Posterior vena cava (tissue), 2 donors: ENCODE measurements at regions of chr15 and their contacts with region 1.

Region 1: GRCh38 chr15:93823971-93824913 is 407.1 kb upstream of the MCTP2 start:
- DNase-seq: no peak

Region 2: GRCh38 chr15:93997084-93997918 is 173.1 kb after region 1 on chr15:
- intact Hi-C with region 1: no loop called
- DNase-seq: no peak

Region 3: GRCh38 chr15:94119923-94120775 is 295.9 kb after region 1 on chr15:
- intact Hi-C with region 1: loop called in 1 of 2 experiments (anchors 5 kb)
- DNase-seq: no peak